ENCODE measurements at regions of chr11 and their contacts with region 1.

Region 1: DNA sequence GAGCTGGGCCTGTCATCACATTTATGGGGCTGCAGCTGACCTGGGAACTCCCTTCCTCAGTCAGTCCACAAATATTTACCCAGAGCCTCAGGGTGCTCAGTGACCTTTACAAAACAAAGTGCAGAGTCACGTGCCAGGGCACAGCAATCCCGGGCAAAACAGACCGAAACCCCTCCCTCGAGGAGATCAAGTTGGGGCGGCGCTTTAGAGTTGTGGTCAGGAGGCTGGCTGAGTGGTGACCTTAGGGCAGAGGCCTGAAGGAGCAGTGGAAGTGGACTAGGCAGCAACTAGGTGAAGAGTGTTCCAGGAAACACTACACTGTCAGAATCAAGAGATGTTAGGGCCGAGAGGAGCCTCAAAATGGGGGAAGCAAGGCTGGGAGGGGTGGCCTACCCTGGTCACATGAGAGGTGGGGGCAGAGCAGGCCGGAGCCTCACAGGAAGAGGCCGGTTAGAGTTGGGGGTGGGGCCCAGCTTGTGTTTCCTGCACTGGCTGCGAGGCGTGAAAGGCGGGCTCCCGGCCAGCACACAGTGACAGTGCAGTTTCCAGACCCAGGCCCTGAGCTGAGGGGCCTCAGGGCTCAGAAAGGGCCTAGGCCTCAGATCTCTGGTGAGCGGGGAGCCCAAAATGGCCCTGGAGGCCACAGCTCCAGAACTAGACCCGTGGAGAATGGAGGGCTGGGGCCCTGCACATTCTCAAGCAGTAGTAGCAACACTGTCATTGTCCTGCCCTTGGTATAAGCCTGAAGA is 3.7 kb upstream of the NEAT1 start:
- DNase-seq: no peak
- H3K4me3 ChIP-seq: peak overlapping the region; percentile 46
- CTCF ChIP-seq: no peak

Region 2: DNA sequence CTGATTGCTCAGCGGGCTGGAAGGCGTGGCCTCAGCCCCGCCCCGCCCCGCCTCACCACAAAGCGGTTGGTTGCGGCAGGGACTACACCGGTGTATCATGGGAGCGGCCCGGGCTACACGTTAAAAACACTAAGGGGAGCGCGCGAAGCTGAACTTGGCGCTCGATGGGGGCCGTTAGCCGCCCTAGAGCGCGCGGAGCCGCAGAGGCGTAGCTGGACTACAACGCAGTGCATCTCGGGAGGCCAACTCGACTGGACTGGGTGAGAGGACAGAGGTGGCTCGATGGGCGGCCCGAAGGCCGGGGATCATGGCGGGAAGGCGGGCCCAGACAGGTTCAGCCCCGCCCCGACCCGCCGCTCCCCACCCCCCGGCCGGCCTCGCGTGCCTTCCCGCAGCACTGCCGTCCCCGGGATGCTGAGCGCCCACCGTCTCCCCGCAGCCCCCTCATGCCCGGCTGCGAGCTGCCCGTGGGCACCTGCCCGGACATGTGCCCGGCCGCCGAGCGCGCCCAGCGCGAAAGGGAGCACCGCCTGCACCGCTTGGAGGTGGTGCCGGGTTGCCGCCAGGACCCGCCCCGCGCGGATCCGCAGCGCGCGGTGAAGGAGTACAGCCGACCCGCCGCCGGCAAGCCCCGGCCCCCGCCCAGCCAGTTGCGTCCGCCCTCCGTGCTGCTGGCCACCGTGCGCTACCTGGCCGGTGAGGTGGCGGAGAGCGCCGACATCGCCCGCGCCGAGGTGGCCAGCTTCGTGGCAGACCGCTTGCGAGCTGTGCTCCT is 377.9 kb before region 1 on chr11 and contains the start of gene SAC3D1:
- CTCF ChIA-PET with region 1: no interaction called
- POLR2A ChIA-PET with region 1: no interaction called
- DNase-seq: peak; percentile 37
- H3K4me3 ChIP-seq: peak within 1 kb of the TSS; percentile 73
- CTCF ChIP-seq: no peak

Region 3: DNA sequence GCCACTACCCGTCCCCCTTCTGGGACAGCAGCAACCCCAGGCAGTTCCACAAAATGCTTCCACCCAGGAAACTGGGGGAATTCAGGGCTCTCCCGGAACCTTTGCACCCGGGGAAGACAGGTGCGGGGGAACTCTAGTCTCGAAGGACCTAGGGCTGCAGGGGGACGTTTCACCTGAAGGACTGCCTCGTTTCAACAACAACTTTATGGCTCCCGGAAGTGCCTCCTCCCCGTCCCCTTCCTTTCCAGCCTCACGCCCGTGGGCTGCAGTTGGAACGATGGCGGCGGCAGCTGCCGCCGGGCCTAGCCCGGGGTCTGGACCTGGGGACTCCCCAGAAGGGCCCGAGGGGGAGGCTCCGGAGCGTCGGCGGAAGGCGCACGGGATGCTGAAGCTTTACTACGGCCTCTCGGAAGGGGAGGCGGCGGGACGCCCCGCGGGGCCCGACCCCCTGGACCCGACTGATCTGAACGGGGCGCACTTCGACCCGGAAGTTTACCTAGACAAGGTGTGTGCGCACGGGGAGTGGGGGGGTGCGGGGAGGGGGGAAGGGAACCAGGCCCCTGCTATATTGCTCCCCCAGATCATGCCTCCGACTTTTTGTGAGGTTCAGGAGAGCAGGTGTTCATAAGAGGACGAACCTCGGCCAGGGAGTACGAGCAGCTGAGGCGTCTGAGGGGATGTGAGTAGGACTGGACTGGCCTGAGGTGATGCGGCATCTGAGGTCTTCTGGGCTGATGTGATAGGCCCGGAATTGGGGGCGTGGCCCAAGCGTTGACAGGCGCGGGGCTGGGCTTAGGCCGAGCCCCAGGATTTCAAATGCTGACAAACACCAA is 322.7 kb before region 1 on chr11 and contains the start of gene VPS51:
- CTCF ChIA-PET with region 1: no interaction called
- POLR2A ChIA-PET with region 1: no interaction called
- DNase-seq: no peak
- H3K4me3 ChIP-seq: peak within 1 kb of the TSS; percentile 76
- CTCF ChIP-seq: no peak

Region 4: GRCh38 chr11:65213322-65214211 is 205.3 kb before region 1 on chr11:
- CTCF ChIA-PET with region 1: no interaction called
- POLR2A ChIA-PET with region 1: no interaction called
- DNase-seq: no peak
- H3K4me3 ChIP-seq: no peak overlapping the region
- CTCF ChIP-seq: no peak

Region 5: DNA sequence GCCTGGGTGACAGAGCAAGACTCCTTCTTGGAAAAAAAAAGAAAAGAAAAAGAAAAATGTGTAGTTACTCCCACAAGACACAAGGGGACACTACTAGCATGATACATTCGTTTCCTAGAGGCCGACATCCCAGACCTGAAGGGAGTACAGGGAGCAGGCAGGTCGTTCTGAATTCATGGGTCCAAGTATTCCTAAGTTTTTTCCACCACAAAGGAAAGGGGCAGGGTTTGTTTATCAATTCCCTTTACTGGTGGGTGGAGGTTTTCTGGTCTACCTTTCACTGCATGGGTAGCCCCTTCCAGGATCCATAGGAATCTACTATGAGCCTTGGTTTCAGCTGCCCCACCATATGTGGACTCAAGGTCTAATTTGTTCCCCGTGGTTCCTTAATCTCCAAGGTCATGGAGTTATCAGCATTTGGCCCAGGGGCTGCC is 52.5 kb before region 1 on chr11:
- CTCF ChIA-PET with region 1: interaction called, 14 read pairs
- POLR2A ChIA-PET with region 1: interaction called, 28 read pairs
- DNase-seq: no peak
- H3K4me3 ChIP-seq: no peak overlapping the region
- CTCF ChIP-seq: peak; percentile 67

Region 6: DNA sequence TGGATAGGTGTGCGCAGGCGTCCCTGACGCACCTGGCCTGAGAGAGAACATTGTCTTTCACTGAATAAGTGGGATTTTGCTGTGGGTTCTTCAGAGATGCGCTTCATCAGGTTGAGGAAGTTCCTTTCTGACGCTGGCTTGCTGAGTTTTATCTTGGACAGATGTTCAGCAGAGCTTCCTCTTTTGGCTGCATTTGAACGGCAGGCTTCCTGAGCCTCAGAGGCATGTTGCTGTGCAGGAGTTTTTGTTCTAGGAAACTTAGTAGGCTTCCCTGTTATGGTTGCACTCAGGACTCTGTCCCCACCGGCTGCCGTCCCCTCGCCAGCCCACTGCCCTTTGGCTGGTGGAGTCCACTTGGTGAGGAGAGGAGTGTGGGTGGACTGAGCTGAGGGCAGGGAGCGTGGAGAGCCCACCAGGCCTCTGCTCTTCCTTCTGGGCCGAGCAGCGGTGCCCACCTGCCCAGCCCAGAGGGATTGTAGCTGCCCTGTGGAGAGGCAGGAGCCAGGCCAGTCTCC is 15.2 kb before region 1 on chr11:
- CTCF ChIA-PET with region 1: interaction called, 123 read pairs
- POLR2A ChIA-PET with region 1: interaction called, 6 read pairs
- DNase-seq: no peak
- H3K4me3 ChIP-seq: no peak overlapping the region
- CTCF ChIP-seq: no peak

Region 7: DNA sequence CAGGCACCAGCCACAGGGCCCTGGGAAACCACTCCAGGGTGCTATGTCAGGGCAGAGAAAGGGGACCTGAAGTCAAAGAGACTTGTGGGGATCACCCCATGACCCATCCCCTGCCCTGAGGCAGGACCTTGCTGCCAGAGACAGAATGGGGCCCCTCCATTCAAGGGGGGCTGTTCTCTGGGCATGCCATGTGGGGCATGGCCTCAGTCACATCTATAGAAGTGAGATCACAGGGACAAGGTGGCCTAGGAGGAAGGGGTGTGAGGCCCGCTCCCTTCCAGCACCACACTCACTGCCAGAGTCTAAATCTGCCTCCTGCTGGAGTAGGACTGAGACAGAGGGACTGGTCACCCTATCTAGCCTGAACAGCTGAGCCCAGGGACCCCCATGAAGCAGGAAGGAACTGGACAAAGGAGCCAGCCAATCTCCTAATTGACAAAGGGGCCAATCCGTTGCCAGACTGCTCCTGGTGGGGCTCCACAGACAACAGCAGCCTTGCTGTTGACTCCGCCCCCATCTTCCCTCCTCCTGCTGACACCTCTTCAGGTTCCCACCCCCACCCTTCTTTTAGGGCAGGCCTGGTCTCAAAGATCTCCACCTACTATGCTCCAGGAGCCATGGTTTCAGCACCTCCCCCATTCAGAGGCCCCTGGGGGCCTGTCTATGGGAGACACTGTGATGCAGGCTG is 29.7 kb after region 1 on chr11:
- CTCF ChIA-PET with region 1: interaction called, 8 read pairs
- POLR2A ChIA-PET with region 1: interaction called, 27 read pairs
- DNase-seq: no peak
- H3K4me3 ChIP-seq: no peak overlapping the region
- CTCF ChIP-seq: no peak

Region 8: DNA sequence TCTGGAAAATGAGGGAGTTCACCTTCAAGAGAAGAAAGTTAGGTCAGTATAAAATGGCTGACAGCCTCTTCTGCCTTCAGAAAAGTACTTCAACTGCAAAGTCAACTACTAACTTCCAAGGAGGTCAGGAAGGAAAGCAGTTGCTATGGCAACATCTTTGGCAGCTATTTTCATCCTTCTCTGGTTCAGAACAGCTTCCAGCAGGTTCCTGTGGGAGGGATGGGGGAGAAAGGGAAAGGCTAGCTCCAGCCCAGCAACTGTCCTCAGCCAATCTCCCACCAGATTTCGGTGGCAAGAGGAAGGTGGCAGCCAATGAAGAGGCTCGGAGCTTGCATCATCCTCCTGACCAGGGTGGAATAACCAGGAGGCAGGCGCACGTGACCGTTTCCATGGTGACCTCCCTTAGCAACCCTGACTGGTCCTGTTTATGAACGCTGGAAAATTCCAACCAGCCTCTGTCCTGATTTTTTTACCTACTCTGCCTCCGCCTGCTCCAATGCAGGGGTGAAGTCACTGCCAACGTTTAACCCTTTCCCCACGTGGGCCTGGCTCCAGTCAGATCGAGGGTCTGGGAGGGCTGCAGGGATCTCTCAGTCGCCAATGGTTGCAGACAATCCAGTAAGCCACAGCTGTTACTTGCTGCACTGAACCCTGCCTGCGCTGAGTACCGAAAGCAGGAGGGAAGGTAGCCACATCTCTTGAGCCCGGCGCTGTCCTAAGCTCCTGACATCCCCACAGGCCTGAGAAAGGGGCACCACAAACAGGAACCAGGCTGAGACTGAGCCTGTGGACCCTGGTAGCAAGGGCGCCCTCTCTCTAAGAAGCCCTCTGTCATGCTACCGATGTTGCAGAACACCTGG is 68.8 kb after region 1 on chr11:
- CTCF ChIA-PET with region 1: interaction called, 17 read pairs
- POLR2A ChIA-PET with region 1: interaction called, 57 read pairs
- DNase-seq: peak; percentile 100
- H3K4me3 ChIP-seq: peak overlapping the region; percentile 28
- CTCF ChIP-seq: no peak

Region 9: DNA sequence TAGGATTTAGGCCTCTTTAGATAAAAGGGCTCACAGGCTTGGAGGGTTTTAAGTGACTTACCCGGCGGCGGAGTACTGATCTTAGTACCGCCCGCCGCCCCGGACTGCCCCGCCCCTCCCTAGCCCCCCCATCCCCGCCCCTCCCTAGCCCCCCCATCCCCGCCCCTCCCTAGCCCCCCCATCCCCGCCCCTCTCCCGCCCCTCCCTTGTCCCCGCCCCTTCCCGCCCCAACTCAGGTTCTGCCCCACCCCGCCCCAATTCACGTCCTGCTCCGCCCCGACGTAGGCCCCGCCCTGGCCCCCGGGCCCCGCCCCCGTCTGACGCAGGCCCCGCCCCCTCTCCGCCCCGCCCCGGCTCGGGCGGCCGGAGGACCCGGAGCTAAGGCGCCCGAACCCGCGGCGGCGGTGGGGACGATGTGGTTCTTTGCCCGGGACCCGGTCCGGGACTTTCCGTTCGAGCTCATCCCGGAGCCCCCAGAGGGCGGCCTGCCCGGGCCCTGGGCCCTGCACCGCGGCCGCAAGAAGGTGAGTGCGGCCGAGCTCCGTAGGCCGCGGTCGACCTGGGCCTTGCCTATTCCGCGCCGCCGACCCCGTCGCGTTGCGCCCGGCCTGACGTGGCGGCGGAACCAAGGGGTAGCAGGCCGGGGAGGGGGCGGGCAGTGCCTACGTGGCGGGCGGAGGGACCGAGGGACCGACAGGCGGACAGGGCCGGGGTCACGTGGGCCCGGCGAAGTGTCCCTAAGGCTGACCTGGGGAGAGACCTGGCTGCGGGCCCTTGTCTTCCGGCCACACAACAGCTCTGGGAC is 106.1 kb after region 1 on chr11 and contains the start of gene SCYL1:
- CTCF ChIA-PET with region 1: interaction called, 17 read pairs
- POLR2A ChIA-PET with region 1: interaction called, 8 read pairs
- DNase-seq: no peak
- H3K4me3 ChIP-seq: peak within 1 kb of the TSS; percentile 85
- CTCF ChIP-seq: no peak

Region 10: DNA sequence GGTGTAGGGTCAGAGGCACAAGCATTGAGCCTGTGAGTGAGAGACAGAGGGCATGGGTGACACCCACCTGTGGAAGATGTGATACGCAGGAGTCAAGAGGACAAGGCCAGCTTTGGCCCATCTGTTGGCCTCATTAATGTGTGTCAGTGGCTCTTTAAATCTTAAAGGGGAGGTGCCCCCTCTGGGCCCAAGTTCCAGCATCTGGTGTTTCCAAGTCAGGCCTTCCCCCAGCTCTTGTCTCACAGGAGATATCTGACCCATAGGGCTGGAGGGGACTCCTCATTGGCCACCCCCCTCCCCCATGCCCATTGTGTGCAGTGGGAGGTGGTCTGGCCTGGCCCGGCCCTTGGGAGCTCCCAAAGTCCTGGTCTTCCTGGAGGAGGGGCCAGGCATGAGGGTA is 167.8 kb after region 1 on chr11:
- CTCF ChIA-PET with region 1: no interaction called
- POLR2A ChIA-PET with region 1: no interaction called
- DNase-seq: no peak
- H3K4me3 ChIP-seq: no peak overlapping the region
- CTCF ChIP-seq: no peak